GM10248 (cell line): ENCODE measurements at regions of chr1 and their contacts with region 1.

Region 1: DNA sequence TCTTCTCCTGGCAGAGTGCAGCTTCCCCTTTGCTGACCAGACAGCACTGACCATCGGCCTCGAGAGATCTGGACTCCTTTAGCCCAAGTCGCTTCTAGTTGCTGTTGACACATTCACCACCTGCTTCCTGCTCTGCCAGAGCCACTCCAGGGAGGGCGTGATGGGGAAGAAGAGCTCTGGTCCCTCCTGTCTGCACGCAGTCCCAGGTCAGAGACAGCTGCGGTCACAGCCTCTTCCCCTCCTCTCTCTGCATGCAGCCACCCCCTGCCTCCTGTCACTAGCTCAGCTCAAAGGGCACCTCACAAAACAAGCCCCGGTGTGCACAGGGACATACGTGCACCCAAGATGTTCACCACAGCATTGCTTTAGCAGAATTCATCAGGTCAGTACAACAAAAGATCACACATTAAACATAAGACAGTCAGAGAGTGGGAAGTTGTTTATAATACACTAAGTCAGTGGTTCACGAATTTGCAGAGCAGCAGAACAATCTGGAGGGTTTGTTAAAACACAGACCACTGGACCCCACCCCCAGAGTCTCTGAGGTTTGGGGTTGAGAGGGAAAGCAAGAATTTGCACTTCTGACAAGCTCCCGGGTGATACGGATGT is 132.9 kb downstream of the SYF2 start:
- DNase-seq: no peak
- CTCF ChIP-seq: no peak

Region 2: GRCh38 chr1:24888971-24889676 is 210.3 kb before region 1 on chr1:
- CTCF ChIA-PET with region 1: no interaction called
- POLR2A ChIA-PET with region 1: no interaction called
- DNase-seq: no peak
- CTCF ChIP-seq: no peak

Region 3: GRCh38 chr1:24930204-24931145 is 169.0 kb before region 1 on chr1 and contains the start of gene RUNX3:
- CTCF ChIA-PET with region 1: interaction called, 15 read pairs
- POLR2A ChIA-PET with region 1: no interaction called
- DNase-seq: peak; percentile 96
- CTCF ChIP-seq: peak; percentile 36

Region 4: DNA sequence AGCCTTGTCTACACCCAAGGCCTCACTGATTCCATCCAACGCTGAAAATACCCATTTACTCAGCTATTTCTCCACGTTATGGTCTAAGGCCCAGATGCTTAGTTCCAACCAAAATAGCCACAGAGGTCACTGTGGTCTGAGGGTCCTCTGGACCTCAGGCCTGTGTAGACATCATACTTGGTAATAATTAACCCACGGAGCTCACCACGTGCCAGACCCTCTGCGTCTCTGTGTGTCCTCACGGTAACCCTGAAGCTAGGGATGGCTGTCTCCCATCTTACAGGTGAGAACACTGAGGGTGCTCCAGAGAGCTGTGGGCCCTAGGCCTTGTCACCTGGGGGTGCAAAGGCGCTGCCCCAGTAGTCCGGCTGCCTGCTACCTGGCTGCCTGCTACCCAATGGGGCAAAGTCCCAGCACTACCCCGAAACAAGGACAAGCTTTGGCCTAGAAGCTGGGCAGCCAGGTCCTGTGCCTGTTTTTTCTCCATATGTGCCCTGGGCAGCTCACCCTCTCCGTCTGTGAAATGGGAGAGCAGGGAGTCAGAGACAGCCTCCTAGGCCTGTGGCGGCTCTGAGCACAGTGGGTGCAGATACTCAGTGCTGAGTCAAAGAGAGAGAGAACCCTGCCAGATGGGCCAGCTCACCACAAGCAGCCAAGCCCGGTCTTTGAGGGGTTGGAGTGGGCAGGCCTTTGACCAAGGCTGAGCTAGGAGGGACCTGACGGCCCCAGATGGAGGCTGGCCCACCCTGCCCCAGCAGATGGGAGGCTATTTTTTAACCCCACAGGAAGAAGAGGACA is 152.4 kb before region 1 on chr1:
- CTCF ChIA-PET with region 1: interaction called, 13 read pairs
- POLR2A ChIA-PET with region 1: no interaction called
- DNase-seq: peak; percentile 86
- CTCF ChIP-seq: no peak

Region 5: GRCh38 chr1:25080294-25081209 is 18.9 kb before region 1 on chr1:
- CTCF ChIA-PET with region 1: interaction called, 11 read pairs
- POLR2A ChIA-PET with region 1: no interaction called
- DNase-seq: no peak
- CTCF ChIP-seq: no peak